Heart left ventricle (tissue), 16 donors: ENCODE measurements at regions of chr1 and their contacts with region 1.

Region 1: GRCh38 chr1:92960395-92961130 is 699 bp downstream of the DIPK1A start:
- DNase-seq: peak in 4 of 5 donors; percentile 54 to 72 (median 66)
- ATAC-seq: peak; percentile 70 to 88 (median 78)
- H3K4me3 ChIP-seq: peak overlapping the region; percentile 61 to 99 (median 90)
- H3K27ac ChIP-seq: peak overlapping the region; percentile 44 to 99 (median 96)
- H3K4me1 ChIP-seq: peaks cover 0 to 43% (median 16%) of the 10 kb centered on the region in 12 donors
- H3K27me3 ChIP-seq: no peaks in the 10 kb centered on the region
- CTCF ChIP-seq: peak; percentile 43 to 86 (median 60)
- POLR2A ChIP-seq: no peak

Region 2: DNA sequence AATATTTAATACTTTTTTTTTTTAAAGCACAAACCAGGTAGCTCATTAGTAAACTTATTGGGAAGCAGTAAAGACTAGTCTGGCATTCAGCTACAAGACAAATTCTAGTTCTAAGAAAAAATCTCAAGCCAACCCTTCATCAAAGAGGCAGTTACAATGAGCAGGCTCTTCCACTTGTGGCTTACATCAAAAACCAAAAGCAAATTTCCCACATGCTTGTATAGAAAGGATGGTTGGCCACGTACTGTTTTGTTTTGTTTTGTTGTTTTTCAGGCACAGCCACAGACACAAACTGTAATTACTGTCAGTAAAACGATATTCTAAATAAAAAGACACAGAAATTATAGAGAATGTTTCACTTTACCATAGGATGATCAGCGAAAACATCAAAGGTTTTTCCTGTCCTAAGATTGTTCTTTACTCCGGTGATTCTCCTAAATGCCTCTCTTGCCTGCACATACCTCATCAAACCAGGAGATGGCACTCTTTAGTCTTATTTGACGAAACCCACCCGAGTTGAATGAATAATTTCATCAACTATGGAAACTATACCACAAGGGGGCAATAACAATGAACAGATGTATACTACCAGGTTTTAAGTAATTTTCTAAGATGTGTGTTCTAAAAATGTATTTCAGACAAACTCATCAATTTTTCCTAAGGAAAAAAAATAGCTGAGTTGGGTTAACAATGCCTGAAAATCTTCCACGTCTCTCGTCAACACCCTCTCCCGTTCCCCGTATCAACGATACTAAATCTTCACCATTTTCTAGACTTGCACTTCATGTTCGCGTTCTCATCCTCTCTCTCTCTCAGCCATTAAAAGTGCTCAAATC is 101.8 kb before region 1 on chr1:
- intact Hi-C with region 1: loop called in 9 of 10 experiments (anchors 1 to 10 kb)
- DNase-seq: peak in 2 of 5 donors; percentile 40 to 42
- ATAC-seq: peak; percentile 79 to 86 (median 82)
- H3K4me3 ChIP-seq: peak overlapping the region in 9 of 12 donors; percentile 21 to 53 (median 33)
- H3K27ac ChIP-seq: peak overlapping the region in 1 of 12 donors; percentile 33
- H3K4me1 ChIP-seq: peaks cover 0 to 14% (median 5%) of the 10 kb centered on the region in 12 donors
- H3K27me3 ChIP-seq: no peaks in the 10 kb centered on the region
- CTCF ChIP-seq: peak in 11 of 12 donors; percentile 89 to 99 (median 94)
- POLR2A ChIP-seq: no peak

Region 3: GRCh38 chr1:92937731-92938130 is 22.8 kb before region 1 on chr1:
- intact Hi-C with region 1: loop called in 1 of 10 experiments (anchors 1 kb)
- DNase-seq: no peak
- ATAC-seq: no peak
- H3K4me3 ChIP-seq: no peak overlapping the region
- H3K27ac ChIP-seq: no peak overlapping the region
- H3K4me1 ChIP-seq: peaks cover 5 to 61% (median 26%) of the 10 kb centered on the region in 12 donors
- H3K27me3 ChIP-seq: no peaks in the 10 kb centered on the region
- CTCF ChIP-seq: no peak
- POLR2A ChIP-seq: no peak

Region 4: GRCh38 chr1:92994105-92994712 is 33.6 kb after region 1 on chr1:
- intact Hi-C with region 1: loop called in 6 of 10 experiments (anchors 1 to 5 kb)
- DNase-seq: peak in 4 of 5 donors; percentile 68 to 79 (median 74)
- ATAC-seq: peak; percentile 80 to 93 (median 88)
- H3K4me3 ChIP-seq: no peak overlapping the region
- H3K27ac ChIP-seq: no peak overlapping the region
- H3K4me1 ChIP-seq: peaks cover 0 to 8% (median 0%) of the 10 kb centered on the region in 12 donors
- H3K27me3 ChIP-seq: no peaks in the 10 kb centered on the region
- CTCF ChIP-seq: peak; percentile 85 to 93 (median 88)
- POLR2A ChIP-seq: no peak

Region 5: DNA sequence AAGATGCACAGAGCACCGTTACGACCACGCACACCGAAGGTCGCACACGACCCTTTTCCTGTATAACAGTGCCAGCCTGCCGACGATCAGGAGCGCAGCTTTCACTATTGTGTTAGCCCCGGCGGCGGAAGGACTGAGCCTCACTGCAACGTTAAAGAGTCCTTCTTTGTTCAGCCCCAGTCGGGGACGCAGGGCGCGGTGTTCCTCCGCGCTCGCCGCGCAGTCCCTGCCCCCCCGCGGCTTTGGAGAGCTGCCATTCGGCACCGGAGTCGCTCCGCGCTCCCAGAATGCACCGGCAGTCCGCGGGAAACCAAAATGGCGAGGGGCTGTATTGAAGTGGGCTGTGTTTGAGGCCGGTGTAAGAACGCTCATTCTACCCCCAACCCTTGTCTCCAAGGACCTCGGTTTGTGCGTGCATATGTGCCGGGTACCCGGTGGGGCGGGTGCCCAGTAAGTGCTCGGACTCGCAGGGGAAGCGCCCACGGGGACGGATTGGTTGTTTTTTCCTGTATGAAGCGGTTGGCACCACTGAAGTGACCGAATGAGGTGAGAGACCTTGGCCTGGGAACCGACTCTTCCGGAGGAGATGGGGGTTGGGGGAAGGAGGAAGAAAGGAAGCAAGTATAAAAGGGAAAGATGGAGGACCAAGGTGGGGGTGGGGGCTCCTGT is 118.6 kb after region 1 on chr1 and contains the start of gene MTF2:
- intact Hi-C with region 1: loop called in 2 of 10 experiments (anchors 5 kb)
- DNase-seq: peak; percentile 96 to 98 (median 97)
- ATAC-seq: peak; percentile 95 to 98 (median 97)
- H3K4me3 ChIP-seq: peak within 1 kb of the TSS; percentile 61 to 96 (median 84)
- H3K27ac ChIP-seq: peak within 1 kb of the TSS; percentile 54 to 91 (median 82)
- H3K4me1 ChIP-seq: peaks cover 0 to 50% (median 22%) of the 10 kb centered on the region in 12 donors
- H3K27me3 ChIP-seq: no peaks in the 10 kb centered on the region
- CTCF ChIP-seq: no peak
- POLR2A ChIP-seq: peak in 1 of 2 donors; percentile 75
- total RNA-seq, gene MTF2: 4.8 to 11.4 (median 8.0) TPM